ENCODE measurements at regions of chr17 and their contacts with region 1.

Region 1: GRCh38 chr17:58200017-58200633 is 7.6 kb downstream of the EPX start:
- DNase-seq: peak; percentile 63
- H3K4me3 Mint-ChIP-seq: no peak overlapping the region
- H3K27ac Mint-ChIP-seq: no peak overlapping the region
- H3K4me1 Mint-ChIP-seq: no peaks in the 10 kb centered on the region
- H3K27me3 Mint-ChIP-seq: peaks cover 9% of the 10 kb centered on the region

Region 2: DNA sequence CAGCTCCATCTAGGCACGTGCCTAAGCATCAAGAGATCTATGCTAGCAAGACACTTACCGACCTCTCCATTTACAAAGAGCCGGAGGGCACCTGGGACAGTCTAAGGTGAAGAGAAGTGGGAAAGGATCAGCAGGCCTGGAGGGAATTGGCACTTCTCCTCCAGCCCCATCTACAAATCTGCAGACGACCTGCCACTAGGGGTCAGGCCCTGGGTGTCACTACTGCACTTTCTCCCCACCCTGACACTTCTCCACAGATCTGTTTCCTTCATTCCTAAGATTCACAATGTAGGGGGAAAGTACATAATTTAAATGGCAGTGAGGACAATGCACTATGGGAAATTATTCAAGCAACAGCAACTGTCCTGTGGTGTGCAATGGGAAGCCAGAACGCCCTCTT is 10.8 kb after region 1 on chr17:
- CTCF ChIA-PET with region 1: interaction called, 25 read pairs
- POLR2A ChIA-PET with region 1: interaction called, 4 read pairs
- DNase-seq: no peak
- H3K4me3 Mint-ChIP-seq: no peak overlapping the region
- H3K27ac Mint-ChIP-seq: no peak overlapping the region
- H3K4me1 Mint-ChIP-seq: peaks cover 5% of the 10 kb centered on the region
- H3K27me3 Mint-ChIP-seq: no peaks in the 10 kb centered on the region

Region 3: GRCh38 chr17:58219001-58219788 is 19.1 kb after region 1 on chr17 and contains the start of gene MKS1:
- CTCF ChIA-PET with region 1: interaction called, 13 read pairs
- POLR2A ChIA-PET with region 1: interaction called, 3 read pairs
- DNase-seq: peak; percentile 97
- H3K4me3 Mint-ChIP-seq: peak within 1 kb of the TSS; percentile 95
- H3K27ac Mint-ChIP-seq: peak within 1 kb of the TSS; percentile 93
- H3K4me1 Mint-ChIP-seq: peaks cover 30% of the 10 kb centered on the region
- H3K27me3 Mint-ChIP-seq: peaks cover 4% of the 10 kb centered on the region
- total RNA-seq, gene MKS1: 18.7 to 19.8 TPM

Region 4: DNA sequence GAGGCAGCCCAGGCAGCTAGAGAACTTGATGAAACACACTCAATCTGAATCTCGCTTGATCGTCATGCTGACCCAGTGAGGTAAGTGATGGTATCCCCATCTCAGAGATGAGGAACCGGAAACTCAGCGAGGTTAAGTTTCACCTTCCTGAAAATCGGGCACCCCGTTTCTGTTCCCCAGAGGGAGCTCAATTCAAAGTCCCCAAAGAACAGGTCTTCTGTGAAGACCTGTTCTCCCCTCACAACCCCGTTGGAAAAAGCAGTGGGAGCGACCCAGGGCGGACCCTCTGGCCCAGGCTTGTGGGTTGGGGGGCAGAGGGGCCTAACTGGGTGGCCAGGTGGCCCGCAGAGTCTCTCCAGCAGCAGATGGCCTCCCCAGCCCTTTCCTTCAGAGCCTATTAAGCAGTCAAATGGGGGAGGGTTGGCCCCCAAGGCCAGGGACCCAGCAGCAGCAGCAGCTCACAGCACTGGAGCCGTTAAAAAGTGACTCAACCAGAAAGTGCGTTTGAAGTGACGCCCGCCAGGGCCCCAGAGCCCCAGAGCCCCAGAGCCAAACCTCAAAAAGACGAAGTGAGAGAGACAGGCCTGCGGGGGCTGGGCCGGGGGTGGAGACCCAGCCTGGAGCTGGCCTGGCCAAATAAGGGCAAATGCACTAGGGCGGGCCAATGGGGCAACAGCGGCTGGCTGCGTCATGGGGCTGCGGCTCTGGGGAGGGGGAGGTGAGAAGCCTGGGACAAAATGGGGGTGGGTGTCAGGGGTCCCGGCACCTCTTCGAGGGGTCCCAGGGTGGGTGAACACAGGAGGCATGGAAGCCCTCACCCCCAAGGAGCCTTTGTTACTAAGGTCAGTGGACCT is 137.7 kb after region 1 on chr17:
- CTCF ChIA-PET with region 1: no interaction called
- POLR2A ChIA-PET with region 1: no interaction called
- DNase-seq: peak; percentile 96
- H3K4me3 Mint-ChIP-seq: peak overlapping the region; percentile 98
- H3K27ac Mint-ChIP-seq: peak overlapping the region; percentile 100
- H3K4me1 Mint-ChIP-seq: peaks cover 52% of the 10 kb centered on the region
- H3K27me3 Mint-ChIP-seq: no peaks in the 10 kb centered on the region

Measured in activated CD4-positive, alpha-beta memory T cell treated with anti-CD3 and anti-CD28 coated beads, Interleukin-2, amount 10 ng/mL, durations not matched to agents 7 days and 5 days (primary cell).